Activated CD8-positive, alpha-beta memory T cell treated with anti-CD3 and anti-CD28 coated beads, Interleukin-2, amount 10 ng/mL, durations not matched to agents 7 days and 5 days (primary cell): ENCODE measurements at regions of chr1 and their contacts with region 1.

Region 1: GRCh38 chr1:185170291-185170848 is 13.4 kb downstream of the SWT1 start:
- DNase-seq: peak; percentile 68
- ATAC-seq: peak; percentile 92
- H3K4me3 Mint-ChIP-seq: no peak overlapping the region
- H3K27ac Mint-ChIP-seq: peak overlapping the region; percentile 28
- H3K4me1 Mint-ChIP-seq: peaks cover 19% of the 10 kb centered on the region
- H3K27me3 Mint-ChIP-seq: no peaks in the 10 kb centered on the region

Region 2: DNA sequence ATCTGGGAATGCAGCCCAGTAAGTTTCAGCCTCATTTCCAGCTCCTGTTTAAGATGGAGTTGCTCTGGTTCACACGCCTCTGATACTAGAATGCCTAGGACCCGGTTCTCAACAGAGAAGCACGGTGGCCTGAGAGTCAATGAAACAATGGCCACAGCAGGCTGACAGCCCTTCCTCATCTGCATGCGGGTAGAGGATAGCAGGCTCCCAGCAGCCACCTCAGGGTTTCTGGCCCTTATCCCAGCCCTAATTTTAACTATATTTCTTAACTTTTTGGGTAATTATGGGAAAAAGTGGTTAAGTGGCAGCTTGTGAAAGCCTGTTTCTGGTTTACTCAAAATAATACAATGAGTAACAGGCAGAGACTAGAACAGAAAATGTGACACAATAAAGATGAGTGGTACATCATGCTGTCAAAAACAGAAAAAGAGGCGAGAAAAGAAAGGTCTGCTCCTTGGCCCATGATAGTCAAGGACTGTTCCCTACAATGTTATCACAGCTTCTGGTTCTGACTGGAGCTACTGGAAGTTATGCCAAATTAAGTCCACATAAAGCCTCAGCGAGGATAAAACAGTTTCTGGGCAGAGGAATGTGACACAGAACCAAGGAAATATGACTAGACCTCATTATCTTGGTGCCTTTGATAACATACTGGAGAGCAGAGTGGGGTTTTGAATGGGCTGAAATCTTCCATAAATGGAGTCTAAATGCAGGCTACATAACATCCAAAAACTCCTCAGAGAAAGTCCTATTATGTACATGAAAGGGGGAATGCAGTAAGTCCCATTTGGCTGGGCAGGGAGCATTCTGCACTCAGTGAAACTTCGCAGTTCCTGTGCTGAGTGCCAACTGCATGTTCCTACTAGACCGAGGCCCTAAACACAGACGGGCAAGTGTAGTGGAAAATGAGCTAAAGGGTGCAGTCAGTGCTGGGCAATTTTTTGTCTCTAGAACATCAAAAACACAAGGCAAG is 288.1 kb before region 1 on chr1:
- CTCF ChIA-PET with region 1: no interaction called
- DNase-seq: no peak
- ATAC-seq: peak; percentile 48
- H3K4me3 Mint-ChIP-seq: no peak overlapping the region
- H3K27ac Mint-ChIP-seq: peak overlapping the region; percentile 47
- H3K4me1 Mint-ChIP-seq: peaks cover 30% of the 10 kb centered on the region
- H3K27me3 Mint-ChIP-seq: no peaks in the 10 kb centered on the region

Region 3: GRCh38 chr1:185044981-185045813 is 125.2 kb before region 1 on chr1 and contains the start of gene RNF2:
- CTCF ChIA-PET with region 1: interaction called, 23 read pairs
- DNase-seq: peak; percentile 86
- ATAC-seq: peak; percentile 88
- H3K4me3 Mint-ChIP-seq: peak within 1 kb of the TSS; percentile 91
- H3K27ac Mint-ChIP-seq: peak within 1 kb of the TSS; percentile 77
- H3K4me1 Mint-ChIP-seq: peaks cover 28% of the 10 kb centered on the region
- H3K27me3 Mint-ChIP-seq: peaks cover 4% of the 10 kb centered on the region
- total RNA-seq, gene RNF2: 16.1 to 24.9 TPM

Region 4: DNA sequence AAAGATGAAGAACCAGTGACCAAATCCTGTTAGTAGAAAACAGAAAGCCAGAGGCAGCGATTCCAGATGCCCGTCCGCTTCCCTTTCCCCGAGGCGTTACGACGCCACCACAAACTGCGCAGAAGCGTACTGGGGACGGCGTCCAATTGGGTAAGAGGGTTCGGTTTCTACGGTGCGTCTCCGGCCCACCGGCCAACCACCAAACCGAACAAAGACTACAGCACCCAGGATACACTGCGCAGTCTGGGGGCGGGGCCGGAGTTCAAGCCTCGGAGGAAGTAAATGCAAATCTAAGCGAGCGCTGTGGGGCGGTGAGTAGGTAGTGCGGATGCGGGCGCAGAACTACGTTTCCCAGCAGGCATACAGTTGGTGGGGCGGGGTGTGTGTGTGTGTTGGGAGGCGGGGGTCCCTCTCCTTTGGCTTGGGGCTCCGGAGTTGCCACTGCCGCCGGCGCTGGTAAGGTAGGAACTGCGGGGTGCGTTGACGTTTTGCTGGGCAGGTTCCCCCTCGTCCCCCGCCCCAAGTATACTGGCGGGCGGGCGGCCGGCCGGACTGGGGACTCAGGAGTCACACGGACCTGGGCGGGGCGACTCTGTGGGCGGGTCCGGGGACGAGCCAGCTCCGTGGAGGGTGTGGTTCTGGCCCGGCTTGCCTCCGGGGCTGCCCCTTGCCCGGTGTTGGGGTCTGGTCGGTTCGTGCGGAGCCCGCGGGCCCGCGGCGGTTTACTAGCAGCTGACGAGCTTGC is 13.3 kb before region 1 on chr1 and contains the starts of genes SWT1 and TRMT1L:
- CTCF ChIA-PET with region 1: interaction called, 63 read pairs
- DNase-seq: peak; percentile 99
- ATAC-seq: peak; percentile 93
- H3K4me3 Mint-ChIP-seq: peak within 1 kb of the TSS; percentile 86
- H3K27ac Mint-ChIP-seq: peak within 1 kb of the TSS; percentile 97
- H3K4me1 Mint-ChIP-seq: peaks cover 51% of the 10 kb centered on the region
- H3K27me3 Mint-ChIP-seq: no peaks in the 10 kb centered on the region
- total RNA-seq, gene SWT1: 2.2 to 2.4 TPM
- total RNA-seq, gene TRMT1L: 23.2 to 24.4 TPM

Region 5: DNA sequence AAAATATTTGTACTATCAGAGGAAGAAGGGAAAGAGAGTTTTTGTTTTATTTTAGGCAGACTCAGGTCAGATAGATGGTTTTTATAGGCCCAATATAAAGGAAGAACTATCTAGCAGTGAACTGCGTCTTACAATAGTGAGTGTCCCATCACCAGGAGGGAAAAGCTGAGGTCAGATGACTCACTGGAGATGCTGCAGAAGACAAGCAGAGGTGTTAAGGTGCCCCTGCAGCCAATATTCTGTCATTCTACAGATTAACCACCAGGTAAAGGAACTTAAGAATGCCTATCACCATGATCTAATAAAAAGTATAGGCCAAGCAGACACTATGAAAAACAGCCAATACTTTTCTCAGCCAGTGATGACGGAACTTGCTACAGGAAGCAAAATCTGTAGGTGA is 117.1 kb after region 1 on chr1:
- CTCF ChIA-PET with region 1: no interaction called
- DNase-seq: no peak
- ATAC-seq: no peak
- H3K4me3 Mint-ChIP-seq: no peak overlapping the region
- H3K27ac Mint-ChIP-seq: no peak overlapping the region
- H3K4me1 Mint-ChIP-seq: peaks cover 16% of the 10 kb centered on the region
- H3K27me3 Mint-ChIP-seq: no peaks in the 10 kb centered on the region